CD8-positive, alpha-beta memory T cell (primary cell): ENCODE measurements at regions of chr6 and their contacts with region 1.

Region 1: DNA sequence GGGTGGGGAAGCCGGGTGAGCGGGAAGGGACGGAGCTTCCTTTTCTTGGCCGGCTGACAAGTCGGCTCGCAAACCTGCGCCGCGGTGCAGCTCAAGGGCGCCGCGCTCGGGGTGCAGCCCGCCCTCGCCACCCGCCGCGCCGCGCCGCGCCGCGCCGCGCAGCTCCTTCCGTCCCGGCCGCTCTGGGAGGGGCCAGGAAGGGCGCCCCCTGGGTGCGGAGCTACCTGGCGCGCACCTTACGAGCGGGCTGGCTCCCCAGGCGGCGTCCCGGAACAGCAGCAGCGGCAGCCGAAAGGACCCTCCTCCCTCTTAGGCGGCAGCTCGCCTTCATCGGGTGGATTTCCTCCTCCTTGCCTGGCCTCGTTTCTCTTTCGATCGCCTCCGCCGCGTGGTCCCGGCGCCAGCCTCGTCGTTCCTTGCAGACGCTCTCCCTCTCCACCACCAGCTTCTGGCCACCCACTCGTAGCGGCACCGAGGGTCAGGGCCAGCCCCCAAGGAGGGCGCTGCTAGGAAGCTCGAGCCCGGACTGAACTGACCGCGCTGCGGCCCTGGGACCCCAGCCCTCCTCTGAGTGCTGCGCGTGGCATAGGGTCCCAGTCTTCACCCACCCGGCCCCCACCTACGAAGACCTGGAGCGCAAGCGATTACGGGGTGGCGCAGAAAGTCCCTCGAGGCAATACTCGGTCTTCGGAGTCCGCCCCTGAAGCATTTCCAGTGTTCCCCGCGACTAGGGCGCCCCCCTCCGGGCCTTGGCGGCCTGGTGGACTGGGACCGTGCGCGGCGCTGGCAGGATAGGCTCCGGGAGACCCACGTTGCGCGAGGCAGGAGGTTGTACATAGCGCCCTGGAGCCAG is at the start of gene MAP3K5:
- DNase-seq: peak; percentile 88 to 96 (median 92)
- H3K4me3 ChIP-seq: peak within 1 kb of the TSS; percentile 99
- H3K4me3 Mint-ChIP-seq: peak within 1 kb of the TSS; percentile 94 to 99 (median 98)
- H3K27ac ChIP-seq: peak within 1 kb of the TSS; percentile 94
- H3K27ac Mint-ChIP-seq: peak within 1 kb of the TSS; percentile 94 to 99 (median 96)
- H3K4me1 ChIP-seq: peaks cover 39% of the 10 kb centered on the region
- H3K4me1 Mint-ChIP-seq: peaks cover 34 to 43% (median 41%) of the 10 kb centered on the region in 3 donors
- H3K27me3 ChIP-seq: no peaks in the 10 kb centered on the region
- H3K27me3 Mint-ChIP-seq: no peaks in the 10 kb centered on the region
- total RNA-seq, gene MAP3K5: 12.6 to 12.9 TPM

Region 2: DNA sequence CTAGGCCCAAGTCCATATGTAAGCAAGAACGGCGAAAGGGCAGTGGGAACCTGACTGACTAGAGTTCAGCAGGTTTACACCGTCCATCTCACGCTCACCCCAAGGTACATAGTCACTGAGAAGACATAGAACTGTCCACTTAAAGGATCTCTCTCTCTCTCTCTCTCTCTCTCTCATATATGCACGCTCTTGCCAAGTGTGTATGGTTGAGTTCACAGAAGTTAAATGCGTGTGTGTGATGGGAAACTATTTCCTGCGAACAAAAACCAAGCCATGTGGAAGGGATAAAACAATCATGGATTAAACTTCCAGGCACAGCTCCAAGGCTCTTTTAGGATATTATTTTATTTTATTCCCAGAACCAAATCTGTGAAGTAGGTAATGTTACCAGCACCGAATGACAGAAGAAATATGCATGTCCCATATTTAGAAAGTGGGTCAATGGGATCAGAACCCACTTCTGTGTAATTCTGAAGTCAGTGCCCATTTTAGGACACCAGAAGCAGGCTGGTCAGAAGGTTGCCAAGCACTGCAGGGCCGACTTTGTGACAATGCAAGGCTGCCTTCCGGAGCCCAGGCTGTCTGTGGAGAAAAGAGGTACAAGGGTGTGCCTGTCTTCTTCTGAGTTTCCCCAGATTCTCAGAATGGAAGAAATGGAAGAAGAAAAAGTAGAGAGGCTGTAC is 193.2 kb before region 1 on chr6:
- CTCF ChIA-PET with region 1: interaction called, 11 read pairs
- POLR2A ChIA-PET with region 1: interaction called, 3 read pairs
- DNase-seq: no peak
- H3K4me3 ChIP-seq: no peak overlapping the region
- H3K4me3 Mint-ChIP-seq: no peak overlapping the region
- H3K27ac ChIP-seq: no peak overlapping the region
- H3K27ac Mint-ChIP-seq: peak overlapping the region in 2 of 8 donors; percentile 38 to 51
- H3K4me1 ChIP-seq: peaks cover 3% of the 10 kb centered on the region
- H3K4me1 Mint-ChIP-seq: peaks cover 8 to 19% (median 11%) of the 10 kb centered on the region in 3 donors
- H3K27me3 ChIP-seq: no peaks in the 10 kb centered on the region
- H3K27me3 Mint-ChIP-seq: peaks cover 0 to 1% of the 10 kb centered on the region in 2 donors

Region 3: DNA sequence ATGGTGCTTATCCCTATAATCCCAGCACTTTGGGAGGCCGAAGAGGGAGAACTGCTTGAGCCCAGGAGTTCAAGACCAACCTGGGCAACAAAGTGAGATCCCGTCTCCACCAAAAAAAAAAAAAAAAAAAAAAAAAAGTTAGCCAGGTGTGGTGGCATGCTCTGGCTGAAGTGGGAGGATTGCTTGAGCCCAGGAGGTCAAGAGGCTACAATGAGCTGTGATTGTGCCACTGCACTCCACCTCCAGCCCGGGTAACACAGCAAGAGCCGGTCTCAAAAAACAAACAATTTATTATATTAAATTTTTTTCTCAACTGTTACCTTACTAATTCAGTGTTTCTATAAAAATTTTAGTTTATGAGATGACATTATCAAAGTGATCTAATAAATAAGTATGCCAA is 157.0 kb before region 1 on chr6:
- CTCF ChIA-PET with region 1: interaction called, 362 read pairs
- POLR2A ChIA-PET with region 1: no interaction called
- DNase-seq: no peak
- H3K4me3 ChIP-seq: no peak overlapping the region
- H3K4me3 Mint-ChIP-seq: no peak overlapping the region
- H3K27ac ChIP-seq: no peak overlapping the region
- H3K27ac Mint-ChIP-seq: no peak overlapping the region
- H3K4me1 ChIP-seq: no peaks in the 10 kb centered on the region
- H3K4me1 Mint-ChIP-seq: peaks cover 7 to 12% (median 11%) of the 10 kb centered on the region in 3 donors
- H3K27me3 ChIP-seq: no peaks in the 10 kb centered on the region
- H3K27me3 Mint-ChIP-seq: no peaks in the 10 kb centered on the region

Region 4: DNA sequence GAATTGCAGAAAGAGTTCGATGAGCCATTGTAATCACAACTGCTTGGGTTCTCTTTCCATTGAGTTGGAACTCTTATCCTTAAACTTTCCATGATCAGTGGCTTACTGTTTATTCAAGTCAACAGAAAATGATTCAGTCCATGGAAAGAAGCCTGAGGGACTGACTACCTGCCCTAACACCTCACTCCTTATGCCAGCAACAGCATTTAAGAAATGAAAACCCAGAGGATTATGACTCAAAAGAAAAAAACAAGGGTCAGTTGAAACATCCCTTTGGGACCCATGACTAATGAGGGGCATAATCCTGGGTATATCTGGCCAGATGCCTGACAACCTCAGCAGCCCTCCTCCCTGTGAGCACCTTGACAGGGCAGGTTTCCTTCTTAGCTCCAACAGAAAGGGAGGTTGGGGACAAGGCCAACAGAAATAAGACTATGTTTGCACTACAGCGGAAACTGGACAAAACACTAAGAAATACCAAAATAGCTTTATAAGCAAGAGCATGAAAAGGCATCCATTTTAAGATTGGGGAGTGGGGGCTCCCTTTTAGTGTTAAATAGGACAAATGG is 107.0 kb before region 1 on chr6:
- CTCF ChIA-PET with region 1: interaction called, 13 read pairs
- POLR2A ChIA-PET with region 1: no interaction called
- DNase-seq: no peak
- H3K4me3 ChIP-seq: no peak overlapping the region
- H3K4me3 Mint-ChIP-seq: no peak overlapping the region
- H3K27ac ChIP-seq: no peak overlapping the region
- H3K27ac Mint-ChIP-seq: peak overlapping the region in 1 of 8 donors; percentile 41
- H3K4me1 ChIP-seq: no peaks in the 10 kb centered on the region
- H3K4me1 Mint-ChIP-seq: peaks cover 26 to 42% (median 27%) of the 10 kb centered on the region in 3 donors
- H3K27me3 ChIP-seq: no peaks in the 10 kb centered on the region
- H3K27me3 Mint-ChIP-seq: no peaks in the 10 kb centered on the region

Region 5: DNA sequence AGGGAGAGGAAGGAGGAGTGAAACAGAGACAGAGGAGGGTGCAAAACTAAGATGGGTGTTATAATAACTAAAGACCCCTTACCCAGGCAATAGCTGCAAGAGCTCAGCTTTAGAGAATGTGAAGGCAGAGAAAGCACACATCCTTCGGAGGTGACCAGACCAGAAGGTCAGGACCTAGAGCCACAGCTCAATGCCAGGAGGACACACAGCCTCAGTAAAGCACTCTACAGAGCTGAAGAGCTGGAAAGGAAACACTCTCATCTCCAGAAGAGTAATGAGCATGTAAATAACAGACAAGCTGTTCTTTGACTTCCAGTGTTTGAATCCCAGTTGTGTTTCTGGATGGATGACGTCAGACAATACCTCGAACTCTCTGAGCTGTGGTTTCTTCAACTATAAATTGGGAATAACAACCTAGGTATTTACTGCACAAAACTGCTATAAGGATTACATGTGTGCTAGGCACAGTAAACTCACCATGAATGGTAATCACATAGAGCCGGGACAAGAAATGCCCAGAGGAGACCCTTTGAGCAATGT is 63.6 kb before region 1 on chr6:
- CTCF ChIA-PET with region 1: interaction called, 21 read pairs
- POLR2A ChIA-PET with region 1: interaction called, 5 read pairs
- DNase-seq: no peak
- H3K4me3 ChIP-seq: no peak overlapping the region
- H3K4me3 Mint-ChIP-seq: no peak overlapping the region
- H3K27ac ChIP-seq: no peak overlapping the region
- H3K27ac Mint-ChIP-seq: peak overlapping the region in 2 of 8 donors; percentile 20 to 66
- H3K4me1 ChIP-seq: no peaks in the 10 kb centered on the region
- H3K4me1 Mint-ChIP-seq: peaks cover 48 to 81% (median 69%) of the 10 kb centered on the region in 3 donors
- H3K27me3 ChIP-seq: no peaks in the 10 kb centered on the region
- H3K27me3 Mint-ChIP-seq: no peaks in the 10 kb centered on the region

Region 6: DNA sequence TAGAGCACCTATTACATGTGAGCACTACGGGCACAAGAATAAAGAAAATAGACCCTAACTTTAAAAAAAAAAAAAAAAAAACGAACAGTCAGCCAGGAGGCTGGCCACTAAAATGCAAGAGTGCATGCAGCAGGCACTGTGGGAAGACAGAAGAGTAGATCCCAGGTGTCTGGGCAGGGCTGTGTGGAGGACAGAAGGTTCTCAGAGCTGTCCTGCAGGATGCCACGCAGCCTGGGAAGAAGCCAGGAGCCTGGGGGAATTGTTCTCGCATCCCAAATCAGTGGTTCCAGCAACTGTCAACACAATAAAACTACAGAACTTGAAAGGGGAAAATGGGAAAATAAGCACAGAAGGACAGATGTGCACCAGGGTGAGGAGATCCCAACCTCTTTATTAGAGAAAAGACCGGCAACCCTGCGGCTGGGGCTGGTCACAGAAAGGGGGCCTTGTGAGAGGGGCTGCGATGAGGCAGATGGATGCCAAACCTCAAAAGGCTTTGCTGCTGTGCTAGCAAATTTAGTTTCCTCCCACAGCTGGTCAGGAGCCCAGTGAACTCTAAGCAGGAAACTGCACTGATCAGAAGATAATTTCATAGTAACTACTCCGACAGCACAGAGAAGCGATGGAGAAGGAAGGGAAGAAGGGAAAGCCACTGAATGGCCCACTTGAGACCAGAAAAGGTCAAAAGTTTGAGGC is 31.3 kb before region 1 on chr6:
- CTCF ChIA-PET with region 1: interaction called, 127 read pairs
- POLR2A ChIA-PET with region 1: interaction called, 27 read pairs
- DNase-seq: peak in 2 of 5 donors; percentile 30 to 53
- H3K4me3 ChIP-seq: peak overlapping the region; percentile 16
- H3K4me3 Mint-ChIP-seq: peak overlapping the region; percentile 57 to 87 (median 82)
- H3K27ac ChIP-seq: no peak overlapping the region
- H3K27ac Mint-ChIP-seq: peak overlapping the region; percentile 58 to 97 (median 92)
- H3K4me1 ChIP-seq: peaks cover 60% of the 10 kb centered on the region
- H3K4me1 Mint-ChIP-seq: peaks cover 75 to 80% (median 75%) of the 10 kb centered on the region in 3 donors
- H3K27me3 ChIP-seq: no peaks in the 10 kb centered on the region
- H3K27me3 Mint-ChIP-seq: no peaks in the 10 kb centered on the region

Region 7: GRCh38 chr6:136822376-136823127 is 29.9 kb after region 1 on chr6 and contains the start of gene PEX7:
- CTCF ChIA-PET with region 1: interaction called, 7 read pairs
- POLR2A ChIA-PET with region 1: interaction called, 21 read pairs
- DNase-seq: peak; percentile 77 to 93 (median 92)
- H3K4me3 ChIP-seq: peak within 1 kb of the TSS; percentile 83
- H3K4me3 Mint-ChIP-seq: peak within 1 kb of the TSS; percentile 91 to 98 (median 94)
- H3K27ac ChIP-seq: peak within 1 kb of the TSS; percentile 83
- H3K27ac Mint-ChIP-seq: peak within 1 kb of the TSS; percentile 84 to 98 (median 96)
- H3K4me1 ChIP-seq: peaks cover 19% of the 10 kb centered on the region
- H3K4me1 Mint-ChIP-seq: peaks cover 26 to 43% (median 43%) of the 10 kb centered on the region in 3 donors
- H3K27me3 ChIP-seq: no peaks in the 10 kb centered on the region
- H3K27me3 Mint-ChIP-seq: peaks cover 6 to 14% of the 10 kb centered on the region in 2 donors
- total RNA-seq, gene PEX7: 4.8 to 5.5 TPM

Region 8: GRCh38 chr6:136889271-136890191 is 96.9 kb after region 1 on chr6:
- CTCF ChIA-PET with region 1: no interaction called
- POLR2A ChIA-PET with region 1: no interaction called
- DNase-seq: no peak
- H3K4me3 ChIP-seq: no peak overlapping the region
- H3K4me3 Mint-ChIP-seq: no peak overlapping the region
- H3K27ac ChIP-seq: no peak overlapping the region
- H3K27ac Mint-ChIP-seq: no peak overlapping the region
- H3K4me1 ChIP-seq: no peaks in the 10 kb centered on the region
- H3K4me1 Mint-ChIP-seq: peaks cover 0 to 2% (median 0%) of the 10 kb centered on the region in 3 donors
- H3K27me3 ChIP-seq: no peaks in the 10 kb centered on the region
- H3K27me3 Mint-ChIP-seq: no peaks in the 10 kb centered on the region